MCF 10A (cell line): ENCODE measurements at regions of chr5 and their contacts with region 1.

Region 1: DNA sequence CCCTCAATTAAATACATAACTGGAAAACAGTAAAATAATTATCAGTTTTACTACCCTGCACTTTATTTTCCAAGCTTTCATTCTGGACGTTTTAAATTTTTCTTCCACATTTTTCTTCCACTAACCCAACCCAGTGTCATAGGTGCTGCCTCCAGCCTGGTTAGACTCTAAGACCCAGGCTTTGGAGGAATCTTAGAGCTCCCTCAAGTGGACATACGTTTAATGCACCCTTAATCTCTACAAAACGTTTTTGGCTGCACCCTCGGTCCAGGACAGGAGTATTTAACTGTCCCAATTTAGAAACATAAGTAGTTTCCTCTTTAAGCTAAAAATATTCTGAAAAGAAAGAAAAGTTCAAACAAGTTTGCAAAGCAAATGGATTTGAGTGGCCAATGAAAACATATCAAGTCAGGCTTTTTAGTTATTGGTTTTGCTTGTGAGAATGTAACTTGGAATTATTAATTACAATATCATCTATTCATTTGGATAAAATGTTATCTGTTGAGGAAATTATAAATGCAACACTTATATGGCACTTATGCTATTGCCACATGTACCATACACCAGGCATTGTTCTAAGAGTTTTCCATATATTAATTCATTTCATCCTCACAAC is 38.9 kb downstream of the CDH6 start:
- DNase-seq: peak; percentile 73
- H3K4me3 Mint-ChIP-seq: no peak overlapping the region
- H3K27ac Mint-ChIP-seq: no peak overlapping the region
- H3K4me1 Mint-ChIP-seq: no peaks in the 10 kb centered on the region
- H3K27me3 Mint-ChIP-seq: no peaks in the 10 kb centered on the region
- CTCF ChIP-seq: peak; percentile 73

Region 2: DNA sequence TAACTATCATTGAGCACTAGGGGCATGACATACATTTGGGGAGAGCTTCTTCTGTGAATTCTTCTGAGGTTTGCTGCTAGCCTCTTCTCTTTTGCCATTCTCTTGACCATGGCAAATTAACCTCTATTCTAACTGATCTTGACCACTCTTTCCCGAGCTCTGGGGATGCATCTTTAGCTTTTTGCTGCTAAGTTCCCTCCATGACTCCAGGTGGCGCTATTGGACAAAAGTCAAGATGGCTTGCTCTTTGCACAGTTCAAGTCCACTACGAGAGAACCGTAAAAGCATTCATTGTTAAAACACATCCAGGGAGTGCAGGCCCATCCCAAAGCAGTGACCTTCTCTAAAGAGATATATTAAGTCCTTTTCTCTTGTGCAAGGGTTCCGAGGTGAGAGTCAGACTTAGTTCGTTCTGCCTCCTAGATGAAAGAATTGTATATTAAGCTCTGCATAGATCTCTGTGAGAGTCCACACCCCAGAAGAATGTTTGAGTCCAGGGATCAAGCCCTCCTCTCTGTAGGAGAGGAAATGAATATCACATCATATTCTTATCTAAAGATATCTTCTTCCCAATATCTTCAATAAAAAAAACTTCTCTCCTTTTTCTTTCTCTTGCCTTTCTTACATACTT is 1191.8 kb before region 1 on chr5:
- CTCF ChIA-PET with region 1: interaction called, 62 read pairs
- POLR2A ChIA-PET with region 1: no interaction called
- intact Hi-C with region 1: loop called (anchors 1 kb)
- DNase-seq: peak; percentile 84
- H3K4me3 Mint-ChIP-seq: no peak overlapping the region
- H3K27ac Mint-ChIP-seq: no peak overlapping the region
- H3K4me1 Mint-ChIP-seq: peaks cover 8% of the 10 kb centered on the region
- H3K27me3 Mint-ChIP-seq: no peaks in the 10 kb centered on the region
- CTCF ChIP-seq: peak; percentile 82

Region 3: DNA sequence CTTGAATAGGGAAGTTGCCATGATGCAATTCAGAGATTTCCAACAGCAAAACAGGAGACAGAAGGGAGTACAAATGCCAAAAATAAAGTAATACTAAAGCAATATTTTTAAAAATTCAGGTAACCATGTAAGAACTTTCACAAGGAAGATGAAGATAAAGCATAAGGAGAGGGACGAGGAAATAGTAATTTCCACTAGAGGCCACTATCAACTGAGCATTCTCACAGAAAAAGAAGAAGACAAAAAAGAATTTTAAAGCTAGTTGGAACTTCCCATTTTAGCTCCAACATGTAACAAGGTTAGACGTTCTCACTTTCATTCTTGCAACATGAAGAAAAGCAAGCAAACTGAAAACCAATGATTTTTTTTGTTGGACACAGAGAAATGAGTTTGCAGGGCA is 818.8 kb before region 1 on chr5:
- CTCF ChIA-PET with region 1: interaction called, 13 read pairs
- POLR2A ChIA-PET with region 1: no interaction called
- intact Hi-C with region 1: no loop called
- DNase-seq: no peak
- H3K4me3 Mint-ChIP-seq: no peak overlapping the region
- H3K27ac Mint-ChIP-seq: no peak overlapping the region
- H3K4me1 Mint-ChIP-seq: no peaks in the 10 kb centered on the region
- H3K27me3 Mint-ChIP-seq: no peaks in the 10 kb centered on the region
- CTCF ChIP-seq: peak; percentile 9

Region 4: DNA sequence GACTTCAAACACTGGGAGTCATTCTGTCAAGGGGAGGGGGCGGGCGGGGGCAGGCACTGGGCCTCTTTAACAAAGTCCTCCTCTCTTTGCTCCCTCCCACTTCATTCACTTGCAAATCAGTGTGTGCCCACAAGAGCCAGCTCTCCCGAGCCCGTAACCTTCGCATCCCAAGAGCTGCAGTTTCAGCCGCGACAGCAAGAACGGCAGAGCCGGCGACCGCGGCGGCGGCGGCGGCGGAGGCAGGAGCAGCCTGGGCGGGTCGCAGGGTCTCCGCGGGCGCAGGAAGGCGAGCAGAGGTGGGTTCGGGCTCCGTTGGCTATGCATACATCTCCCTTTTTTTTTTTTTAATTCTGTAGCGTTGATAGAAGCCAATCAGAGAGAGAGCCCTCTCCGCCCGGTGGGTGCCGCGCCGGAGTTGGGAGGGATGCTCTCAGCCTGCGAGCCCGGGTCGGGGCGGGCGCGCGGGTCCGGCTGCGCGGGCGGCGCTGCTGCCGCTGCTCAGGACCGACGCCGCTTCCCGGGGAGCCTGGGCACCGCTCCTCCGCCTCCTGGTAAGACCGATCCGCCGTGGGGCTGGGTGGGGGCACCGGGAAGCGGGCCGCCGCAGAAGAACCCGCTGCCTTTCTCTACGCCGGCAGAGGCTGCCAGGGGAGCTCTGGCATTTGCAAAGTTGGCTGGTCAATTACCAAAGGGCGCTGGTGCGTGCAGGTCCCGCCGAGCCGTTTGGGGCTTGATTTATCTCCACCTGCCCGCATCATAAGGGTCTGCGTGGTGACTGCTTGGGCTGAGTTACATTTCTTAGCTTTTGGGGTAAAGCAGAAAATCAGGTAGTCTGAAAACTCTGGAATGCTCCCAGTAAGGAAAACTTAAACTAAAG is 38.6 kb before region 1 on chr5 and contains the start of gene CDH6:
- CTCF ChIA-PET with region 1: interaction called, 20 read pairs
- POLR2A ChIA-PET with region 1: no interaction called
- intact Hi-C with region 1: no loop called
- DNase-seq: no peak
- H3K4me3 Mint-ChIP-seq: peak within 1 kb of the TSS; percentile 69
- H3K27ac Mint-ChIP-seq: no peak within 1 kb of the TSS
- H3K4me1 Mint-ChIP-seq: peaks cover 32% of the 10 kb centered on the region
- H3K27me3 Mint-ChIP-seq: peaks cover 11% of the 10 kb centered on the region
- CTCF ChIP-seq: no peak
- total RNA-seq, gene CDH6: not detected in 2 replicates

Region 5: DNA sequence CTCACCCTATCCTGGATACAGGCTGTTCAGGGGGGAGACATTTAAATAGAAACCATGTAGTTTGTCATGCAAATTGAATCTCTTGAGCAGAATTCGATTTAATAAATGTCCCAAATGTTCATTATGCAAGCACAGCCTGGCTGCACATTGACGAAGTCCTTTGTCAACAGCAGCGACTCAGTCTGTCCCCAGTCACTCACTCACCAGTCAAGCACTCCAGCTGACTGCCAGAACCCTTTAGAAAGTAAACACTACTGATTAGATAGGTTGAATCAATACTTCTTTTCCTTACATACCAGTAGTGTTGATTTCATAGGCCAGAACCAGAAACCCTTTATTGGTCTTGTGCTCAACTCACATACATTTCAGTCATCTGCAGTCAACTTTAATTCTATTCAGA is 11.4 kb before region 1 on chr5:
- CTCF ChIA-PET with region 1: interaction called, 15 read pairs
- POLR2A ChIA-PET with region 1: no interaction called
- intact Hi-C with region 1: no loop called
- DNase-seq: no peak
- H3K4me3 Mint-ChIP-seq: no peak overlapping the region
- H3K27ac Mint-ChIP-seq: no peak overlapping the region
- H3K4me1 Mint-ChIP-seq: no peaks in the 10 kb centered on the region
- H3K27me3 Mint-ChIP-seq: no peaks in the 10 kb centered on the region
- CTCF ChIP-seq: no peak

Region 6: GRCh38 chr5:31255041-31255440 is 22.7 kb after region 1 on chr5:
- CTCF ChIA-PET with region 1: interaction called, 10 read pairs
- POLR2A ChIA-PET with region 1: no interaction called
- intact Hi-C with region 1: no loop called
- DNase-seq: no peak
- H3K4me3 Mint-ChIP-seq: no peak overlapping the region
- H3K27ac Mint-ChIP-seq: no peak overlapping the region
- H3K4me1 Mint-ChIP-seq: no peaks in the 10 kb centered on the region
- H3K27me3 Mint-ChIP-seq: no peaks in the 10 kb centered on the region
- CTCF ChIP-seq: no peak

Region 7: GRCh38 chr5:31334061-31334860 is 101.9 kb after region 1 on chr5:
- CTCF ChIA-PET with region 1: no interaction called
- POLR2A ChIA-PET with region 1: no interaction called
- intact Hi-C with region 1: no loop called
- DNase-seq: no peak
- H3K4me3 Mint-ChIP-seq: no peak overlapping the region
- H3K27ac Mint-ChIP-seq: no peak overlapping the region
- H3K4me1 Mint-ChIP-seq: no peaks in the 10 kb centered on the region
- H3K27me3 Mint-ChIP-seq: no peaks in the 10 kb centered on the region
- CTCF ChIP-seq: no peak

Region 8: DNA sequence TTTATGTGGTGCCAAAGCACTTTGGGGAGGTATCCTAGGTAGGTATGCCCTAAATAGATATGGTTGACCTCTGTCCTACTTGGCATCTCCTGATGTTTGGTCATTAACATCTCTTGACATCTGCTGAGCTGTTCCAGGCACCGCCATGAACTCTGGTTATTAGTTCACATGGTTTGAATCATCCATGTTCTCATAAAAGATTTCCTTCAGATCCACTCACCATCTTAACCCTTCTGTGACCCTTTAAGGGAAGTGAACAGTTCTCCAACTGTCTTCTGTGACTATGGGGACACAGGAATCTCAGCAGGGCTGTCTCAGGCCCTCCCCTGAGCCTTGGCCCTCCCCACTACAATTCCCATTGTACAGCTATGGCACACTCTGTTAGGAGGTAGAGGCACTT is 128.9 kb after region 1 on chr5:
- CTCF ChIA-PET with region 1: no interaction called
- POLR2A ChIA-PET with region 1: no interaction called
- intact Hi-C with region 1: no loop called
- DNase-seq: no peak
- H3K4me3 Mint-ChIP-seq: no peak overlapping the region
- H3K27ac Mint-ChIP-seq: no peak overlapping the region
- H3K4me1 Mint-ChIP-seq: no peaks in the 10 kb centered on the region
- H3K27me3 Mint-ChIP-seq: no peaks in the 10 kb centered on the region
- CTCF ChIP-seq: no peak